Mucosa of descending colon (tissue), 3 donors: ENCODE measurements at regions of chr10 and their contacts with region 1.

Region 1: GRCh38 chr10:13160934-13161856 is at the start of gene MCM10:
- DNase-seq: peak; percentile 97 to 100 (median 97)
- ATAC-seq: peak; percentile 100
- H3K4me3 ChIP-seq: peak within 1 kb of the TSS; percentile 17
- H3K4me1 ChIP-seq: peaks cover 17% of the 10 kb centered on the region
- CTCF ChIP-seq: peak; percentile 75
- total RNA-seq, gene MCM10: 1.6 to 8.6 (median 2.2) TPM

Region 2: GRCh38 chr10:13115832-13116803 is 45.1 kb before region 1 on chr10:
- intact Hi-C with region 1: loop called in 1 of 2 experiments (anchors 1 kb)
- DNase-seq: peak in 2 of 3 donors; percentile 51 to 69
- ATAC-seq: peak; percentile 94
- H3K4me3 ChIP-seq: no peak overlapping the region
- H3K4me1 ChIP-seq: peaks cover 11% of the 10 kb centered on the region
- CTCF ChIP-seq: no peak